Ovary (tissue), 10 donors: ENCODE measurements at regions of chr17 and their contacts with region 1.

Region 1: DNA sequence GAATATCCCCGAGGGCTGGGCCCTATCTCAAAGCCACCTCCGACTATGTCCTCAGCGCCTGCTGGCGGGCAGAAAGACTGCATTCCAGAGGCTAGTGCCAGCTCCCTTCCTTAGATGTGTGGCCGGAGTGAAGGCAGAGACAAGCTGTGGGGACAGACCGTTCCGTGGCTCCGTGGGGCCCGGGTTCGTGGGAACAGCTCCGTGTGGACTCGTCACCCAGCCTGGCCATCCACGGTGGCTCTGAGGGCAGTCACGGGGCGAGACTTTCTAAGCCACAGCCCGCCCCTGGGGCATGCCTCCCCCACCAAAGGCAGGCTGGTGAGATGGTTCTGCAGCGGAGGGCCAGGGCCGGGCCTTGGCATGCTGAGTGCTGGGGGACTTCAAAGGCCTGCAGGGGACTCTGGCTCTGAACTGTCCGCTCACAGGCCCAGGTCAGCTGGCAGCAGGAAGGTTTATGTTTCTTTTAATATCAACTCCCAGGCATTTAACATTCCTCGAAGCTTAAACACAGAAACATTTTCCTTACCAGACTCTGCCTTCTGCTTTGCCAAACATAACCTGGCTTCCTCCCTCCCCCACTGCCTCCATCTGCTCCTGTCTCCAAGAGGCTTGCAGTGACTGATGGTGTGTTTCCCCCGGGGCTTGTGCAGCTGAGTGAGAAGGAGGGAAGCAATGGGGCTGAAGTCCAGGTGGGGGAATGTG is 50.4 kb downstream of the TIMM22 start:
- DNase-seq: peak in 1 of 5 donors; percentile 24
- H3K4me3 ChIP-seq: no peak overlapping the region
- H3K27ac ChIP-seq: peak overlapping the region in 1 of 2 donors; percentile 28
- H3K4me1 ChIP-seq: peaks cover 9% of the 10 kb centered on the region
- H3K27me3 ChIP-seq: no peaks in the 10 kb centered on the region
- CTCF ChIP-seq: no peak
- EP300 ChIP-seq: no peak
- POLR2A ChIP-seq: no peak

Region 2: DNA sequence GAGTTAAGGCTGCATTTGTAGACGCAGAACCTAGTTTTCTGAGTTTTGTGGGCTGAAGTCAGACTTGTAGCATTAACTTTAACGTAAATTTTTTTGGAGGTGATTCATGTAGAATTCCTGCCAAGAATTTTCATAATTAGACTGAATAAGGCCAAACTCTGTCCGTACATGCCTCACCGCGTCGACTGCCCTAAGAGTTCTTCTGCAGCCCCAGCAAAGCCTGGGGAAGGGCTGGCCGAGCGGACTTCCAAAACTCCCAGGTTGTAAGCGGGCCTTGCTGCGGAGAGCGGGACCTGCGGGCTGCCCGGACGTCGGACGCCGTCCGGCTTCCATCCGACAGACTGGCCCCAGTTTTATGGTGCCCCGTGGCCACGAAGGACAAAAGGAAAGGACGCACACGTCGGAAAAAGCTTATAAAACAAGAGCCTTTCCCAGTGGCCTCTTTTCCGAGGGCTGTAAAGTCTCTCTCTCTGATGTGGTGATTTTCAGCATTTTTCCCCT is 143.3 kb before region 1 on chr17:
- intact Hi-C with region 1: no loop called
- DNase-seq: peak; percentile 48 to 67 (median 55)
- H3K4me3 ChIP-seq: no peak overlapping the region
- H3K27ac ChIP-seq: peak overlapping the region in 1 of 2 donors; percentile 36
- H3K4me1 ChIP-seq: peaks cover 11% of the 10 kb centered on the region
- H3K27me3 ChIP-seq: no peaks in the 10 kb centered on the region
- CTCF ChIP-seq: no peak
- EP300 ChIP-seq: no peak
- POLR2A ChIP-seq: no peak

Region 3: DNA sequence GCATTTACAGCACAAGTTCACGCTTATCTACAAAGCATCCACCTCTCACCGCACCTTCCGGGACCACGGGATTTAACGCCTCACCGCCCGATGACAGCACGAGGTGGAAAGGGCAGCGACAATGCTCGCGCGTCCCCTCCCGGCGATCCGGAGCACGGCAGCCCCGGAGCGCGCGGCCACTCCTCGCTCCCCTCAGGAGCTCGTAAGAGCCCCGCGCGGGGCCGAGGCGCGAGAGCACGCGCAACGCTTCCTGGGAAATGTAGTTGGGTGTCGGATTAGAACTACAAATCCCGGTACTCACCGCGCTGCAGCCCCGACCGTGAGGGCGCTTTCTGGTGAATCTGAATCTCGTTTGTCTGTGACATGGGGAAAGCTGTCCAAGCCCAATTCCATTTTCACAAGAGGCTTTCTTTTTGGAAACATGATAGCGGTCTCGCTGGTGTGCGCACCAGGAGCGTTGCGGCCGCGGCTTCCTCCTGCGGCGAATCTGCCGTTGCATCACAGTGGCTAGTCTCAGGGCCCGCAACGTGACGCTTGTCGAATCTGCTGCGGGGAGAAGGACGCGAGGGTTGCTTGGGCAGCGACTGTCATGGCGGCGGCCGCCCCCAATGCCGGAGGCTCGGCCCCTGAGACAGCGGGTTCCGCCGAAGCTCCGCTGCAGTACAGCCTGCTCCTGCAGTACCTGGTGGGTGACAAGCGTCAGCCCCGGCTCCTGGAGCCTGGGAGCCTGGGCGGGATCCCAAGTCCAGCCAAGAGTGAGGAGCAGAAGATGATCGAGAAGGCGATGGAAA is 50.6 kb before region 1 on chr17 and contains the start of gene TIMM22:
- intact Hi-C with region 1: loop called in 1 of 4 experiments (anchors 5 kb)
- DNase-seq: peak; percentile 87 to 94 (median 92)
- H3K4me3 ChIP-seq: peak within 1 kb of the TSS; percentile 99
- H3K27ac ChIP-seq: peak within 1 kb of the TSS; percentile 83 to 95
- H3K4me1 ChIP-seq: peaks cover 10% of the 10 kb centered on the region
- H3K27me3 ChIP-seq: no peaks in the 10 kb centered on the region
- CTCF ChIP-seq: peak; percentile 66 to 95 (median 90)
- EP300 ChIP-seq: no peak
- POLR2A ChIP-seq: peak; percentile 78
- total RNA-seq, gene TIMM22: 7.9 to 15.1 (median 11.3) TPM

Region 4: DNA sequence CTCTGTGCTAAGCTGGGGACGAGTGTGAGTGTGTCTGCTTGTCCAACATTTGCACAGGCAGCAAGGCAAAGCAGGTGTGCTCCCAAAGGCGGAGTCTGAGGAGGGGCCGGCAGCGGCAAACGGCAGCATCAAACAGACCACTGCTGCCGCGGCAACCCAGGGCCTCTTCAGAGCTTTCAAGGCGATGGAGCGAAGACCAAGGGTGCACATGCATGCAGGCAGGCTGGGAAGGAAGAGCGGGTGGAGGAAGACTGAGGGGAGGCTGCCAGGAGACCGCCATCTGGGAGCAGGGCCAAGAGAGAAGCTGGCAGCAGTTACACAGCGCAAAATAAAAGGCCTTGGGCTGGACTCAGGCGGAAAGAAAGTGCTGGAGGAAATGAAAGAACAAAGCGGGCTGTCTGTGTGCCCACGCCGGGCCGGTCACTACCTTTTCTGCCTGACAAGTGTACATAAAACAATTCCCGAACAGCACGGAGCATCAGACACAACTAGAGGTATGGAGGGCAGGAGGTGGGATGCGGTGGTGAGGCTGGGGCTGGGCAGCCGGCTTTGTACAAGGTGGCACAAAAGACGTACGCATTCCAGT is 41.9 kb before region 1 on chr17:
- intact Hi-C with region 1: loop called in 1 of 4 experiments (anchors 5 kb)
- DNase-seq: peak; percentile 79 to 89 (median 87)
- H3K4me3 ChIP-seq: no peak overlapping the region
- H3K27ac ChIP-seq: peak overlapping the region in 1 of 2 donors; percentile 68
- H3K4me1 ChIP-seq: peaks cover 22% of the 10 kb centered on the region
- H3K27me3 ChIP-seq: no peaks in the 10 kb centered on the region
- CTCF ChIP-seq: no peak
- EP300 ChIP-seq: no peak
- POLR2A ChIP-seq: no peak